ENCODE measurements at regions of chr12 and their contacts with region 1.

Region 1: DNA sequence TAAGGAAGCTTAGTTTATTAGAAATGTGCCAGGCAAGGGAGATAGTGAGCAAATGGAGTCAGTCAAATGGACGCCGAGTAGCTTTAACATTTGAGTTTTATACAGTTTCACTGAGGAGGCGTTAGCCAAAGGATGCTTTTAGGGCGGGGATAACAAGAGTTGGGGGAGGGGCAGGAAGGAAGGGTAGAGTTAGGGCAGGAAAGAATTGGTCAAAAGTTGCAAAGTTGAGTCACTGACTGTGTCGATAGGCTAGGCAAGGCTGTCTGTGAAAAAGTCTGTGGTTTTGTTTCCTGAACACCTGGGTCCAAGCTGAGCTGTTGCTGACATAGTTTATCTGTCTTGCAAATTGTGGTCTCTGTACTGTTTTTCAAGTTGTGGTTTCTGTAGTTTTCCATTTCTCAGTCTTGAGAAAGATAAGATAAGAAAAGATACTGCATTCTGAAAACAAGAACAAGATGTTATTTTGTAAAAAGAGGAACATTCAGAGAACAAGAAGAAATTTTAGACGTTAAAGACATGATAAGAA is 62.6 kb upstream of the RESF1 start:
- DNase-seq: peak; percentile 91
- H3K4me3 ChIP-seq: peak overlapping the region in 1 of 3 experiments; percentile 30
- H3K27ac ChIP-seq: peak overlapping the region; percentile 74
- H3K4me1 ChIP-seq: peaks cover 18% of the 10 kb centered on the region
- H3K27me3 ChIP-seq: no peaks in the 10 kb centered on the region
- CTCF ChIP-seq: no peak
- POLR2A ChIP-seq: no peak

Region 2: GRCh38 chr12:31749024-31749704 is 147.4 kb before region 1 on chr12:
- CTCF ChIA-PET with region 1: no interaction called
- POLR2A ChIA-PET with region 1: interaction called, 8 read pairs
- dilution Hi-C with region 1: no loop called
- intact Hi-C with region 1: loop called (anchors 1 kb)
- DNase-seq: peak; percentile 98
- H3K4me3 ChIP-seq: no peak overlapping the region
- H3K27ac ChIP-seq: peak overlapping the region; percentile 93
- H3K4me1 ChIP-seq: peaks cover 42% of the 10 kb centered on the region
- H3K27me3 ChIP-seq: no peaks in the 10 kb centered on the region
- CTCF ChIP-seq: no peak
- POLR2A ChIP-seq: peak; percentile 33

Region 3: DNA sequence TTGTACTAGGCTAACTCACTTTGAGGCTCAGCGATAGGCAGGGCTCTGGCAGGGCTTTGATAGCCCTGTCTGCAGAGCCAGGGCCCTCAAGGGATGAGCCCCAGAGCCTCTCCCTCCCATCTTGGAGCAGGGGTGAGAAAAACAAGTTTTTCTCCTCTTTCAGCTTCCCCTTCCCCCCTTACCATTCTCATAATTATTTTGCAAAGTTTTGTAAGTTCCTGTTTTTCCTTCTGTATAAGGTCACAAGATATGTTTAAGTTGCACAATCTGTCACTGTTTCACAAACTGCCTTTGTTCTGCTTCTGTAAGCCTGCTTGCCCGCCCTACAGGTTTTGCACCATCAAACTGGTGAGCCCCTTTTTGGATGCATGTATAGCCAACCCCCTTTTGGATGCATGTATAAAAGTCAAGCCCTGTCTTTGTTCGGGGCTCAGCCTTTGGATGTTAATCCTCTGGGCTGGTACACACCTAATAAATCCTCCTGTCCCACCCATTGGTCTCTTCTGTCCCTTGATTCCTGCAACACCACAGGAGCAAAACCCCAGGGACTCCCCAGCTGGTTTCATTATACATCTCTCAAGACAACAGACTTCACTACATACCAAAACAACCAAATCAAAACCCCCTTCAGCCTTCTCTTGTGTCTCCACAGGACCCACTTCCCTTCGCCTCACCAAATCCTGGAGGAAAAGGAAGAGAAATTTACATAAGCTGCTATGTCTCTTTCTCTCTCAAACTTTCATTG is 10.2 kb after region 1 on chr12:
- CTCF ChIA-PET with region 1: no interaction called
- POLR2A ChIA-PET with region 1: no interaction called
- dilution Hi-C with region 1: no loop called
- intact Hi-C with region 1: no loop called
- DNase-seq: no peak
- H3K4me3 ChIP-seq: no peak overlapping the region
- H3K27ac ChIP-seq: no peak overlapping the region
- H3K4me1 ChIP-seq: no peaks in the 10 kb centered on the region
- H3K27me3 ChIP-seq: no peaks in the 10 kb centered on the region
- CTCF ChIP-seq: no peak
- POLR2A ChIP-seq: no peak

Region 4: GRCh38 chr12:32877601-32878459 is 981.3 kb after region 1 on chr12:
- CTCF ChIA-PET with region 1: no interaction called
- POLR2A ChIA-PET with region 1: no interaction called
- dilution Hi-C with region 1: no loop called
- intact Hi-C with region 1: no loop called
- DNase-seq: no peak
- H3K4me3 ChIP-seq: no peak overlapping the region
- H3K27ac ChIP-seq: no peak overlapping the region
- H3K4me1 ChIP-seq: no peaks in the 10 kb centered on the region
- H3K27me3 ChIP-seq: no peaks in the 10 kb centered on the region
- CTCF ChIP-seq: no peak
- POLR2A ChIP-seq: no peak

Measured in endothelial cell of umbilical vein (primary cell).